Activated CD4-positive, alpha-beta T cell treated with anti-CD3 and anti-CD28 coated beads, Interleukin-2, amount 10 ng/mL, durations not matched to agents 7 days and 5 days (primary cell): ENCODE measurements at regions of chr9 and their contacts with region 1.

Region 1: DNA sequence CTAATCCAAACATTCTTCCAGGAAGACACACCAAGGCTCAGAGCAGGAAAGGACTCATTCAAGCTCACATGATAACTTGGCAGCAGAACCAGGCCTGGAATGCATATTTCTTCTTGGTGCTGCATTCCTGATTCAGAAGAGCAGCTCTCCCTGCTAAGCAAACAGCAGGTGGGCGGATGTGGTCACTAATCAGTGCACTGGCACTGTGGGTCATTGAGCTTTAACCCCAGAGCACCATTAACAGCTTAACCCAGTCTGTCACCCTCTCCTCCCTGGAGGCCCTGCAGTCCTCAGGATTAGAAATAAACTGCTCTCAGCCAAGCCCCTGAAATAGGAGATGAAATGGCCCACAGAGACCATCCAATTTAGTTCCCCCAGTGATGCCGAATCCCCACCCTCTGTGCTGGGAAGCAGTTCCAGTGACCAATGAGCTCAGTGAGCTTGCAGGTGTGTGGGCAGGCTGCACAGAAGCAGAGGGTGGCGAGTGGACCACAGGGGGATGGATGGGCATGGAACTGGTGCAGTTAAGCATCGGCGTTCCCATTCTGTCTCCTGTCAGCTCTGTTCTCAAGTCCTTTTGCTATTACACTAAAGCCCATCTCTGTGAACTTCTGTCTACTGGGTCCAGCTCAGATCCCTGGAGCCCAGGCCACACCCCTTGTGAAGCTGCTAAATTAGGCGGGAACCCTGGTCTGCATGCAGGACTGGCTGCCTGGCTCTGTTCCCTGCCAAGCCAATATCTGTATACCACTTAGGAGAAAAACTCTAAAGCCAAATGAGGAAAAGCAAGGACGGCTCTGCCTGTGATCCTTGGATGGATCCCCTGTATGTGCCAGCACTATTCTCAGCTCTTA is 16.6 kb upstream of the MEGF9 start:
- DNase-seq: no peak
- H3K4me3 Mint-ChIP-seq: no peak overlapping the region
- H3K27ac Mint-ChIP-seq: no peak overlapping the region
- H3K4me1 Mint-ChIP-seq: peaks cover 20% of the 10 kb centered on the region
- H3K27me3 Mint-ChIP-seq: no peaks in the 10 kb centered on the region

Region 2: DNA sequence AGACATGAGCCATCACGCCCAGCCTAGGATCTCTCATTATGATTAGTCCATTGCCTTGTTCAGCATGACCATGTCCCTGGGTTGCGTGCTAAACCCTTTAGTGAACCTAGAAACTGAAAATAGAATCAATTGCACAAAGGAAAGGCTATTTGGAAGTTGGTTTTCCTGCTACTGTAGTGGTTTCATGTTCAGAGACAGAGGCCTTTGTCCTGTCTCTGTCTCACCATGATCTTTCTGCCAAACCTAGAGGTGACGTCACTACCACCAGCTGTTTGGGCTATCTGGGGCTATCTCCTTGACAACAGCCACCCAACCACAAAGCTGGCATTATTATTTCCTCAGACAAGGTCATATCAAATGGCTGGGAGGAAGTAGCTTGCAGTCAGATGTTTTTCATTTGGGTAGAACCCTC is 146.9 kb before region 1 on chr9:
- CTCF ChIA-PET with region 1: no interaction called
- POLR2A ChIA-PET with region 1: no interaction called
- DNase-seq: peak; percentile 57
- H3K4me3 Mint-ChIP-seq: no peak overlapping the region
- H3K27ac Mint-ChIP-seq: no peak overlapping the region
- H3K4me1 Mint-ChIP-seq: peaks cover 40% of the 10 kb centered on the region
- H3K27me3 Mint-ChIP-seq: peaks cover 3% of the 10 kb centered on the region

Region 3: DNA sequence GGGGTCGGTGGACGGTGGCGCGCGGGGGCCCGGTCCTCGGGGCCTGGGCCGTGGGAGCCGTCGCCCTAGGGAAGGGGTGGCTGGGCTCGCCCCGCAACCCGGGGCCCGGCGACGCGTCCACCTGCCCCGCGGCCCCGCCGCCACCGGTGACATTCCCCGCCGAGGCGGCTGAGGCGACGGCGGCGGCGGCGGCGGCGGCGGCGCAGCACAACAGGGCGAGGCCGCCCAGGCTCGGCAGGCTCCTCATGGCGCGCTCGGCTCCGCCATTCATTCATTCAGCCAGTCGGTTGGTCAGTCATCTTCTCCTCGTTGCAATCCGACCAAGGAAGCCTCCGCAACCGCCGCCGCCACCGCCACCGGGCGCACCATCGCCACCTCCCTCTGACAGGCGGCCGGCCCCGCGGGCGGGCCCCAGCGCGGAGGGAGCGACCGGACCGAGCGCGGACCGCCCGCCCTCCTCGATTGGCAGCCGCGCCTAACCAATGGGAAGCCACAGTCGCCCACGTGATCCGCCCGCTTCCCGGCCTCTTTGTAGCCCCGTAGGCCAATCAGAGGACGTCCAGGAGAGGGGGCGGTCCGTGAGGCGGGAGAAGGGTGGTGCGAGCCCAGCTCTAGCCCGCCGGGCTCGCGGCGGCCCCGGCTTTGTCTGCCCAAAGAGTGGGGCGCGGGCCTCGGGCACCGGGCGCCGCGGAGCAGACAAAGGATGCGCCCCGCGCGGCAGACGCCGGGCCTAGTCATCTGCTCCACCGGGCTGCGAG is 16.6 kb before region 1 on chr9 and contains the start of gene MEGF9:
- CTCF ChIA-PET with region 1: interaction called, 12 read pairs
- POLR2A ChIA-PET with region 1: no interaction called
- DNase-seq: peak; percentile 98
- H3K4me3 Mint-ChIP-seq: peak within 1 kb of the TSS; percentile 85
- H3K27ac Mint-ChIP-seq: peak within 1 kb of the TSS; percentile 89
- H3K4me1 Mint-ChIP-seq: peaks cover 42% of the 10 kb centered on the region
- H3K27me3 Mint-ChIP-seq: no peaks in the 10 kb centered on the region
- total RNA-seq, gene MEGF9: 9.4 to 10.5 TPM

Region 4: GRCh38 chr9:121405899-121406298 is 675.0 kb after region 1 on chr9:
- CTCF ChIA-PET with region 1: interaction called, 10 read pairs
- POLR2A ChIA-PET with region 1: no interaction called
- DNase-seq: no peak
- H3K4me3 Mint-ChIP-seq: no peak overlapping the region
- H3K27ac Mint-ChIP-seq: no peak overlapping the region
- H3K4me1 Mint-ChIP-seq: no peaks in the 10 kb centered on the region
- H3K27me3 Mint-ChIP-seq: peaks cover 31% of the 10 kb centered on the region